ENCODE measurements at regions of chr12 and their contacts with region 1.

Region 1: GRCh38 chr12:57063991-57064685 is 14.2 kb upstream of the MYO1A start:
- DNase-seq: peak; percentile 81
- H3K4me3 Mint-ChIP-seq: peak overlapping the region; percentile 68
- H3K27ac Mint-ChIP-seq: peak overlapping the region; percentile 96
- H3K4me1 Mint-ChIP-seq: peaks cover 66% of the 10 kb centered on the region
- H3K27me3 Mint-ChIP-seq: no peaks in the 10 kb centered on the region

Region 2: GRCh38 chr12:56751712-56752598 is 312.2 kb before region 1 on chr12 and contains the start of gene PRIM1:
- CTCF ChIA-PET with region 1: interaction called, 5 read pairs
- intact Hi-C with region 1: loop called (anchors 2 kb)
- DNase-seq: peak; percentile 90
- H3K4me3 Mint-ChIP-seq: peak within 1 kb of the TSS; percentile 98
- H3K27ac Mint-ChIP-seq: peak within 1 kb of the TSS; percentile 99
- H3K4me1 Mint-ChIP-seq: peaks cover 40% of the 10 kb centered on the region
- H3K27me3 Mint-ChIP-seq: no peaks in the 10 kb centered on the region
- total RNA-seq, gene PRIM1: 74.9 to 75.0 TPM

Region 3: GRCh38 chr12:56931474-56931978 is 132.6 kb before region 1 on chr12:
- CTCF ChIA-PET with region 1: no interaction called
- intact Hi-C with region 1: no loop called
- DNase-seq: peak; percentile 36
- H3K4me3 Mint-ChIP-seq: no peak overlapping the region
- H3K27ac Mint-ChIP-seq: no peak overlapping the region
- H3K4me1 Mint-ChIP-seq: peaks cover 9% of the 10 kb centered on the region
- H3K27me3 Mint-ChIP-seq: no peaks in the 10 kb centered on the region

Region 4: GRCh38 chr12:57031138-57031725 is 32.9 kb before region 1 on chr12:
- CTCF ChIA-PET with region 1: interaction called, 88 read pairs
- intact Hi-C with region 1: loop called (anchors 1 kb)
- DNase-seq: peak; percentile 64
- H3K4me3 Mint-ChIP-seq: peak overlapping the region; percentile 2
- H3K27ac Mint-ChIP-seq: peak overlapping the region; percentile 42
- H3K4me1 Mint-ChIP-seq: peaks cover 55% of the 10 kb centered on the region
- H3K27me3 Mint-ChIP-seq: no peaks in the 10 kb centered on the region

Region 5: DNA sequence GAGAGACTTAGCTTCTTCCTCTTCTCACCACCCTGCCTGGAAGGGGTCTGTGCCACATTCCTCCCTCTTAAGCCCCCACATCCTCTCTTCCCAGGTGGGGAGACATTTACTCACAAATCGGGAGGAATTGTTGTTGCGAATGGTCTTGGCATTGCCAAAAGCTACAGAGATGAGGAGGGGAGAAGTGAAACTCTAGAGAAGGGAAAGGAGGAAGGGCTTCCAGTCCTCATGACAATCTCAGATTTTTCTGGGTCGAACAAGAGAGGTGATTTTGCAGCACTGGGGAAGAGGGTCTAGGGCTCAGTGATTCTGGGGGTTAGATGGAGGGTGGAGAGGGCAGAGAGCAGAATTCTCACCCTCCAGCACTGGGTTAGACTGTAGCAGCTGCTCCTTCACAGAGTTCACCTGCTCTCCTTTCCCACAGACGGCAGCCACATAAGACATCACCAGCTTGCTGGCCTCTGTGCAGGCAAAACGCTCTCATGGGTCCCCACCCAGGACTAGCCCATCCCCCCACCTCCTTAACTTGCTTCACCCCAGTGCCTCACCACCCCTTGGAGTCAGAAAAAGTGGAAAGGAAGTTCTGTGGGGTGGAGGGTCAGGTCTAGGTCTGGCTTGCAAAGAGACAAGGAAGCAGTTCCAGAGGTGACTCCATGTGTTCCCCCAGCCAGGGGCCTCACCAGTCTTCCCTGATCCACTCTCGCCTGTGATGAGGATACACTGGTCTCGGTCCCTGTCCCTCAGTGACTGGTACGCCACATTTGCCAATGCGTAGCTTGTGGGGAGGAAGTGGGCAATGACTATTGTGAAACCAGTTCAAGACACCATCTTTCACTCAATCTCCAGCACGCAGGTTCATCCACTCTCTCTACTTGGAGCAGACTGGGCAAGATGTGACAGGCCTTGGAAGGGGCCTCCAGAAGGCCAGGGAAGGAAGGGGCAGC is 16.9 kb before region 1 on chr12:
- CTCF ChIA-PET with region 1: interaction called, 11 read pairs
- intact Hi-C with region 1: no loop called
- DNase-seq: peak; percentile 83
- H3K4me3 Mint-ChIP-seq: no peak overlapping the region
- H3K27ac Mint-ChIP-seq: peak overlapping the region; percentile 25
- H3K4me1 Mint-ChIP-seq: peaks cover 36% of the 10 kb centered on the region
- H3K27me3 Mint-ChIP-seq: no peaks in the 10 kb centered on the region

Region 6: GRCh38 chr12:57078519-57079404 is 14.6 kb after region 1 on chr12 and contains the start of gene NEMP1:
- CTCF ChIA-PET with region 1: interaction called, 20 read pairs
- intact Hi-C with region 1: loop called (anchors 1 kb)
- DNase-seq: peak; percentile 98
- H3K4me3 Mint-ChIP-seq: peak within 1 kb of the TSS; percentile 99
- H3K27ac Mint-ChIP-seq: peak within 1 kb of the TSS; percentile 98
- H3K4me1 Mint-ChIP-seq: peaks cover 37% of the 10 kb centered on the region
- H3K27me3 Mint-ChIP-seq: no peaks in the 10 kb centered on the region
- total RNA-seq, gene NEMP1: 71.3 to 72.2 TPM

Measured in activated naive CD4-positive, alpha-beta T cell treated with anti-CD3 and anti-CD28 coated beads for 36 hours (primary cell).